GM10248 (cell line): ENCODE measurements at regions of chr1 and their contacts with region 1.

Region 1: DNA sequence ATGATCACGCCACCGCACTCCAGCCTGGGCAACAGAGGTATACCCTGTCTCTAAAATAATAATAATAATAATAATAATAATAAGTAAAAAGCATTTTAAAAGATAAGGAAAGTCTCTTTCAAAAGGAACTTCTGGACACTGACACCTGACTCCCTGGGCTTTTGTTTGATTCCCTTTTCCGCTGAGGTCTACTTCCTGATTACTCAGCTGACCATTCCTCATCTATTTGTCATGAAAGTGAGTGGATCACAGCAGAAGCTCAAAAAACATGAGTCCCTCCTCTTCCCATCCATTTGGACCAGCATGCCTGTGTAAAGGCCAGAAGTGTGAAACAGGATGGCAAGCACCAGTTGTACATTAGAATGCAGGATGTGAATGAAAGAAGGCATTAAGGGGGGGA is 61.1 kb upstream of the FBXO28 start:
- DNase-seq: no peak
- CTCF ChIP-seq: no peak

Region 2: DNA sequence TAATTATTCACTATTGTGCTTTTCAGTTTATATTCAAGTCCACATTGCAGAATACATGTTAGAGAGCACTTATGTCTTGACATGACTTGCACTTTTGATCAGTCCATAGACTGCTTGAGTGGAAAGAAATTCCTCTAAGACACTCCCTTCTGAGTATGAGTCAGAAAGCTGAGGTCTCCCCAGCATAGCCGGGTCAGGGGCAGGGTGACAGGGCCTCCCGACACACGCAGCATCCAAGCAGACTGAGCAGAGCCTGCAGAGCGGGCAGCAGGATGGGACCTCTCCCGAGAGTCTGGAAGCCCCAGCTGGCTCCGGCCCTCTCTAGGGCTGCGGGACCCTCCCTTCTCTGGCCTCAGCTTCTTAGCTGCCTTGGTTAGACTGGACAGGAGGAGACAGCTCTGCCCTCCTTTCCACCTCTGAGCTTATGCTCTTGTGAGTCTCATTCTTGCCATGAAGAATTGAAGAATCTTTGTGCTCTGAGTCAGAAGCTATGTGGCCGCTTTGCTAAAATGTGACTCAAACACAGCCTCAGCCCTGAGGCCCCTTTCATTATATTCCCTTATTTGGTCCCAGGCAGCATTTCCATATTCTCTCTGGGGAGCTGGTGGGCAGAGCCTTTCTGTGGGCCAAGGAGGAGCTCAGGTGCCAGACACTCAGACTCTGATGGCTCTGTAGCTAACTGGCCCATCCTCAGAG is 351.7 kb before region 1 on chr1:
- CTCF ChIA-PET with region 1: interaction called, 17 read pairs
- POLR2A ChIA-PET with region 1: no interaction called
- DNase-seq: no peak
- CTCF ChIP-seq: no peak

Region 3: GRCh38 chr1:223811634-223812415 is 240.9 kb before region 1 on chr1:
- CTCF ChIA-PET with region 1: interaction called, 20 read pairs
- POLR2A ChIA-PET with region 1: no interaction called
- DNase-seq: no peak
- CTCF ChIP-seq: peak; percentile 53

Region 4: GRCh38 chr1:224042557-224043118 is 10.1 kb before region 1 on chr1:
- CTCF ChIA-PET with region 1: interaction called, 11 read pairs
- POLR2A ChIA-PET with region 1: no interaction called
- DNase-seq: no peak
- CTCF ChIP-seq: no peak

Region 5: DNA sequence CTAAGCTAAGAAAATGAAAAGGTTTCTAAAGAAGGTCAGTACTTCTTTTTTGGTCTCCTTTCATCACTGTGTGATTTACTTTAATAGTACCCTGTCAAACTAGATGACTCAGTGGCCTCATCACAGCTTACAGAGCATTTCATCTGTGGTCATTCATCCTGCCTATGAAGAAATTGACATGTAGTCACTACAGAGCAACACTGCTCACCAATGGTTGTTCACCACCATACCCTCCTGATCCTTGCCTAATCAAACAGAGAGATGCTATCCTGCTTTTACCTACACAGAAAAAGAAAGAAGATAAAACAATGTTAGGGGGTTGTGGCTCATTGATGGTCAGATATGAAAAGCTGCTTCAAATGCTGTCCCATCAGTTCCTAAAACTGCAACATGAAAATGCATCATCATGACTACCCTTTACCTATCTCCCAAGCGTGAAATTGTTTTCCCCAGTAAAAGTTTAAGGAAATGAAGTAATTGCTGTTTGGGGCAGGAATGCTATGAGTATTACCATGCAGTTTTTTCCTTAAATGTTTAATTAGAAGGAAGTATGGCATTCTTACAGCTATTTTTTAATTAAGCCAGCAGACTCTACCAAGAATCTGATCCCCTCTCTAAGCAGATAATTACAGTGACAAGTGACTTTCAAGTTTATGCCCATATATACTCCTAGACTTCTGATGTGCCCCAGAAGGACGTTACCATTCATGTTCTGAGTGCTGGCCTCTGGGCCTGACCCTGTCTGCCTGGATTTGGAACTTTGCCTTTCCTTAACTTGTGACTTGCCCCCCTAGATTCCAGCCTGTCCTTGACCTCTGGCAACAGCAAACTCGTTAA is 15.1 kb after region 1 on chr1:
- CTCF ChIA-PET with region 1: interaction called, 36 read pairs
- POLR2A ChIA-PET with region 1: no interaction called
- DNase-seq: no peak
- CTCF ChIP-seq: no peak

Region 6: GRCh38 chr1:224223819-224224714 is 171.3 kb after region 1 on chr1:
- CTCF ChIA-PET with region 1: no interaction called
- POLR2A ChIA-PET with region 1: no interaction called
- DNase-seq: no peak
- CTCF ChIP-seq: no peak